ENCODE measurements at regions of chr17 and their contacts with region 1.

Region 1: GRCh38 chr17:16438557-16439302 is 23.4 kb downstream of the TRPV2 start:
- DNase-seq: peak; percentile 100
- H3K4me3 ChIP-seq: peak overlapping the region; percentile 99
- H3K27ac ChIP-seq: peak overlapping the region; percentile 86
- H3K27me3 ChIP-seq: no peaks in the 10 kb centered on the region
- CTCF ChIP-seq: no peak

Region 2: GRCh38 chr17:16322636-16323035 is 116.1 kb before region 1 on chr17:
- CTCF ChIA-PET with region 1: no interaction called
- POLR2A ChIA-PET with region 1: no interaction called
- DNase-seq: peak; percentile 88
- H3K4me3 ChIP-seq: no peak overlapping the region
- H3K27ac ChIP-seq: peak overlapping the region; percentile 81
- H3K27me3 ChIP-seq: no peaks in the 10 kb centered on the region
- CTCF ChIP-seq: no peak

Region 3: DNA sequence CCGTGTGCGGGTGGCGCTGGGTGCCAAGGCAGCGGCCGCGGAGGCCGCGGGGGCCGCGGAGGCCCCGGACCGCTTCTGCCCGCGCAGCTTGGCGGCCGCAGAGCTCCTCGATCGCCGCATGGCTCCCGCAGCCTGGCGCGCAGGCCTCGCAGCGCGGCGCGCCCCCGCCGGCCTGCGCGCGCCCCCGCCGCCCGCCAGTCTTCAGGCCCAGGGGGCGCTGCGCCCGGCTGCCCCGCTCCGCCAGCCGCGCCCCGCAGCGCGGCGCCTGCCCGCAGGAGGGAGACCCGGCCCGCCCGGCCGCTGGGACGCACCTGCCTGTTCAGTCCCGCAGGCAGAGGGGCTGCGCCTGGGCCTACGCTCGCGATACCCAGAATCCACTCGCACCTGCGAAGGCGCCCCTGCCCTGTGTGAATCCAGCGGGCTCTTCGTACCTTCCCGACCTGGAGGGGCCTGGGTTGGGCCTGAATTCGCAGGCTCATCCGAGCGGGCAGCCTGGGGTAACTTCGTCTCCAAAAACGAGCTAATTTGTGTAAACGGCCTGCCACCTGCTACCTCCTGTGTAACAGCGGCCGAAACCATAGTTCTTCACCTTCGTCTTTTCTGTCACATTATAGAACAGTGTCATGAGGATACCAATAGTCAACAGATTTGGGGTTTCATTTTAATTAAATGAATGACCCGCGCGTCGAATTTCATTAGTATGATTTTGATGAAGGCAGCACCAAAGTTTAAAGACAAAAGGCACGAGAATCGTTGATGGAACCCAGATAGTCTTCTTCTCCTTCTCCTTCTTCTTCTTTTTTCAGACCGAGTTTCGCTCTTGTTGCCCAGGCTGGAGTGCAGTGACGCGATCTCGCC is 85.2 kb before region 1 on chr17 and contains the start of gene CENPV:
- CTCF ChIA-PET with region 1: no interaction called
- POLR2A ChIA-PET with region 1: interaction called, 10 read pairs
- DNase-seq: no peak
- H3K4me3 ChIP-seq: peak within 1 kb of the TSS; percentile 74
- H3K27ac ChIP-seq: peak within 1 kb of the TSS; percentile 80
- H3K27me3 ChIP-seq: no peaks in the 10 kb centered on the region
- CTCF ChIP-seq: peak; percentile 7; the same call in 1 of the 2 replicates
- polyA plus RNA-seq, gene CENPV: 65.2 and 71.9 TPM in 2 replicates

Region 4: GRCh38 chr17:16407911-16408588 is 30.7 kb before region 1 on chr17:
- CTCF ChIA-PET with region 1: no interaction called
- POLR2A ChIA-PET with region 1: interaction called, 10 read pairs
- DNase-seq: no peak
- H3K4me3 ChIP-seq: no peak overlapping the region
- H3K27ac ChIP-seq: no peak overlapping the region
- H3K27me3 ChIP-seq: no peaks in the 10 kb centered on the region
- CTCF ChIP-seq: no peak

Region 5: GRCh38 chr17:16415031-16415924 is 23.5 kb before region 1 on chr17 and contains the start of gene TRPV2:
- CTCF ChIA-PET with region 1: no interaction called
- POLR2A ChIA-PET with region 1: interaction called, 28 read pairs
- DNase-seq: no peak
- H3K4me3 ChIP-seq: peak within 1 kb of the TSS; percentile 68
- H3K27ac ChIP-seq: peak within 1 kb of the TSS; percentile 61
- H3K27me3 ChIP-seq: no peaks in the 10 kb centered on the region
- CTCF ChIP-seq: peak; percentile 11; the same call in 1 of the 2 replicates
- polyA plus RNA-seq, gene TRPV2: 30.8 and 38.4 TPM in 2 replicates

Region 6: GRCh38 chr17:16428098-16428882 is 10.4 kb before region 1 on chr17:
- CTCF ChIA-PET with region 1: interaction called, 11 read pairs
- POLR2A ChIA-PET with region 1: interaction called, 16 read pairs
- DNase-seq: no peak
- H3K4me3 ChIP-seq: no peak overlapping the region
- H3K27ac ChIP-seq: peak overlapping the region; percentile 52
- H3K27me3 ChIP-seq: no peaks in the 10 kb centered on the region
- CTCF ChIP-seq: peak; percentile 81

Region 7: DNA sequence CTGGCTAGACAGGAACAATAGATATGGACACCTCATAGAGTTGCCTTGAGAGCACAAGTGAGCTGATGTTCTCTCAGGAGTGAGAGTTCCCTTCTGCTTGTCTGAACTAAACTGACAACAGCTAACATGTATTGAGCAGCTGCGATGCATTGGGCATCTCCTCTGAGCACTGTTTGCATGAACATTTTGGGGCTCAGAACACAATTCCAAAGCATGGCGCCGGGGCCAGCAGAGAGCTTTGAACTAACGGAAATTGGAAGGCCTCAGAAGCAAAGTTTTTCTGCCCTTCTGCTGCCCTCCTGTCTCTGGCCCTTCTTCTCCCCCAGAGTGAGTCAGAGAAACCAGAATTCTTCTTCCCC is 14.7 kb after region 1 on chr17:
- CTCF ChIA-PET with region 1: interaction called, 7 read pairs
- POLR2A ChIA-PET with region 1: interaction called, 11 read pairs
- DNase-seq: no peak
- H3K4me3 ChIP-seq: no peak overlapping the region
- H3K27ac ChIP-seq: peak overlapping the region; percentile 31
- H3K27me3 ChIP-seq: no peaks in the 10 kb centered on the region
- CTCF ChIP-seq: no peak